ENCODE measurements at regions of chr21 and their contacts with region 1.

Region 1: GRCh38 chr21:28745131-28746016 is 247.3 kb downstream of the LTN1 start:
- DNase-seq: peak; percentile 80
- H3K4me3 ChIP-seq: peak overlapping the region; percentile 68
- H3K27ac ChIP-seq: no peak overlapping the region
- H3K4me1 ChIP-seq: peaks cover 13% of the 10 kb centered on the region
- H3K27me3 ChIP-seq: no peaks in the 10 kb centered on the region

Region 2: GRCh38 chr21:26865857-26866256 is 1879.5 kb before region 1 on chr21:
- in situ Hi-C with region 1: loop called (anchors 5 kb)
- DNase-seq: no peak
- H3K4me3 ChIP-seq: no peak overlapping the region
- H3K27ac ChIP-seq: no peak overlapping the region
- H3K4me1 ChIP-seq: no peaks in the 10 kb centered on the region
- H3K27me3 ChIP-seq: no peaks in the 10 kb centered on the region

Region 3: DNA sequence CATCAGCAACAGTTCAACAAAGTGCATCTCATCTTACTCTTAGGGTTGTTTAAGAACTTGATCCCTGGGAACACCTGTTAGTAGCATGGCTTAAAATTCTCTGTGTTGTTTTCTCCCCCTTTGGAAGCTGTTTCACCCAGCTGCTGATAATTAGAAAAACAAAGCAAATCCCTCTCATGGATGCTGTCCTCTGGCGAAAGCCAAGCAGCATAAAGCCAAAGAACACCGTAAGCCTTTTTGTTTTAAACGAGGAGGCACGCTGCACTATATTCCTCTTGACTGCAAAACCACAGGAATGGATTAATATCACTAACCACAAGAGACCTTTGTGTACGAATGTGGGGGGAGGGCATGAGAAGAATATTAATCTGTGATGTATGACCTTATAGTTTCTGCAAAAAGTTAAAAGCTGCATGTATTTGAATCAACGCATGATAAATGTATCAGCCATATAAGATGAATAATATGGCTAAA is 675.9 kb before region 1 on chr21:
- in situ Hi-C with region 1: loop called (anchors 10 kb)
- DNase-seq: peak; percentile 27
- H3K4me3 ChIP-seq: no peak overlapping the region
- H3K27ac ChIP-seq: no peak overlapping the region
- H3K4me1 ChIP-seq: peaks cover 26% of the 10 kb centered on the region
- H3K27me3 ChIP-seq: no peaks in the 10 kb centered on the region

Region 4: GRCh38 chr21:28336314-28336713 is 409.1 kb before region 1 on chr21:
- in situ Hi-C with region 1: loop called (anchors 10 kb)
- DNase-seq: peak; percentile 87
- H3K4me3 ChIP-seq: peak overlapping the region; percentile 28; the same call in 1 of the 2 replicates
- H3K27ac ChIP-seq: peak overlapping the region; percentile 56
- H3K4me1 ChIP-seq: peaks cover 54% of the 10 kb centered on the region
- H3K27me3 ChIP-seq: no peaks in the 10 kb centered on the region